Common myeloid progenitor, CD34-positive (primary cell): ENCODE measurements at regions of chr16 and their contacts with region 1.

Region 1: GRCh38 chr16:56571525-56571924 is 6.7 kb downstream of the MT4 start:
- DNase-seq: no peak
- H3K4me3 ChIP-seq: no peak overlapping the region
- H3K27ac ChIP-seq: no peak overlapping the region
- H3K4me1 ChIP-seq: no peaks in the 10 kb centered on the region
- H3K27me3 ChIP-seq: peaks cover 0 to 8% (median 2%) of the 10 kb centered on the region in 5 experiments

Region 2: GRCh38 chr16:56608043-56608875 is 36.7 kb after region 1 on chr16 and contains the start of gene MT2A:
- CTCF ChIA-PET with region 1: interaction called, 53 read pairs
- POLR2A ChIA-PET with region 1: no interaction called
- DNase-seq: peak; percentile 94 to 96 (median 95)
- H3K4me3 ChIP-seq: peak within 1 kb of the TSS; percentile 43 to 94 (median 80)
- H3K27ac ChIP-seq: peak within 1 kb of the TSS in 1 of 2 experiments; percentile 70
- H3K4me1 ChIP-seq: peaks cover 7 to 36% (median 33%) of the 10 kb centered on the region in 4 experiments
- H3K27me3 ChIP-seq: peaks cover 0 to 4% (median 0%) of the 10 kb centered on the region in 5 experiments

Region 3: DNA sequence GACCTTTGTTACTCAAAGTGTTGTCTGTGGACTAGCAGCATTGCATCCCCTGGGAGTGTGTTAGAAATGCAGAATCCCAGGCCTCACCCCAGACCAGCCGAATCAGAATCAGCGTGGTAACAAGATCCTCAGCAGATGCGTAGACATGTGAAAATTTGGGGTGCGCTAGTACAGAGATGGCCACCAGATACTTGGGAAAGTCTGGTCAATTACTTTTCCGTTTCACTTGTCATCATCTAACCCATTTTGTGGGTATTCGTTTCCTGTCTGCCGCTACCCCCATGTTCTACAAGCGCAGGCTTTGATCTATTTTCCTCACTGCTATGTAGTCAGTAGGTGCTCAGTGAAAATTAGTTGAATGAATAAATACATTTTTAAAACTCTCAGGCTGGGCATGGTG is 327.3 kb after region 1 on chr16:
- CTCF ChIA-PET with region 1: no interaction called
- POLR2A ChIA-PET with region 1: no interaction called
- DNase-seq: peak in 1 of 3 donors; percentile 28
- H3K4me3 ChIP-seq: no peak overlapping the region
- H3K27ac ChIP-seq: no peak overlapping the region
- H3K4me1 ChIP-seq: peaks cover 0 to 7% (median 0%) of the 10 kb centered on the region in 4 experiments
- H3K27me3 ChIP-seq: peaks cover 0 to 18% (median 0%) of the 10 kb centered on the region in 5 experiments